Caco-2 (cell line): ENCODE measurements at regions of chr15 and their contacts with region 1.

Region 1: GRCh38 chr15:76285239-76285825 is 25.9 kb downstream of the ETFA start:
- DNase-seq: peak in 1 of 2 experiments; percentile 12
- H3K4me3 ChIP-seq: no peak overlapping the region
- H3K4me3 Mint-ChIP-seq: no peak overlapping the region
- H3K27ac Mint-ChIP-seq: no peak overlapping the region
- H3K4me1 ChIP-seq: no peaks in the 10 kb centered on the region
- H3K4me1 Mint-ChIP-seq: peaks cover 2% of the 10 kb centered on the region
- H3K27me3 ChIP-seq: no peaks in the 10 kb centered on the region
- H3K27me3 Mint-ChIP-seq: no peaks in the 10 kb centered on the region
- CTCF ChIP-seq: peak; percentile 47 to 51

Region 2: DNA sequence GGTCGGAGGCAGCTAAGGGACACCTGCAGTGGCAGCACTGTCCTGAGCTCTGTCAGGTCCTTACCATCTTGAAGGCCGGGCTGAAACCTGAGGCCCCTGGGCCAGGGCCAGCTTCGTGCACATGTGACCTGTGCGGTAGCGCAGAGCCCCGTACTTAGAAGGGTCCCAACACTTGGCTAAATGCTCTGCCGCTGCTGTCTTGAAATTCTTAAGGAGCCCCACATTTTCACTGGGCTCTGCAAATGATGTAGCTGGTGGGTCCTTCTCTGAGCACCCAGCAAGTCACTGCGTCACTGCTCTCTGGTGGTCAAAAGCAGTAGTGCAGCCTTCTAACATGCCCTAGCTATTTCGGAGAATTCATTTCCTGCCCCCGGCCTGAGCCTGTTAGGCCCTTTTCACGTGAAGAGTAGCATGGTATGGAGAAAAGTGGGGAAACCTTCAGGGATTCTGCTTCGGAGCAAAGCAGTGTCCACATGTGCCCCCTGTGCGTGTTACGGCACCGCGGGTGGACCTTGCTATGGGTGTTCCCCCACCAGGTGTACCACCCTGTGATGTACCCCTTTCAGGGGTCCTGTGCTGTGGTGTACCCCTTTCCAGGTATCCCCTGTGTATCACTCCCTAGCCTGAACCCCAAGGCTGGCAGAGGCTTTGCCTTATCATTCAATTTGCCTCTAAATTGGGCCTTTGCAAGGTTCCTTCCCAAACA is 145.8 kb before region 1 on chr15:
- CTCF ChIA-PET with region 1: no interaction called
- POLR2A ChIA-PET with region 1: no interaction called
- intact Hi-C with region 1: no loop called
- DNase-seq: peak; percentile 71 to 78
- H3K4me3 ChIP-seq: no peak overlapping the region
- H3K4me3 Mint-ChIP-seq: no peak overlapping the region
- H3K27ac Mint-ChIP-seq: no peak overlapping the region
- H3K4me1 ChIP-seq: no peaks in the 10 kb centered on the region
- H3K4me1 Mint-ChIP-seq: peaks cover 4% of the 10 kb centered on the region
- H3K27me3 ChIP-seq: peaks cover 1% of the 10 kb centered on the region; the same call in 1 of the 2 replicates
- H3K27me3 Mint-ChIP-seq: peaks cover 10% of the 10 kb centered on the region
- CTCF ChIP-seq: peak; percentile 78 to 90

Region 3: DNA sequence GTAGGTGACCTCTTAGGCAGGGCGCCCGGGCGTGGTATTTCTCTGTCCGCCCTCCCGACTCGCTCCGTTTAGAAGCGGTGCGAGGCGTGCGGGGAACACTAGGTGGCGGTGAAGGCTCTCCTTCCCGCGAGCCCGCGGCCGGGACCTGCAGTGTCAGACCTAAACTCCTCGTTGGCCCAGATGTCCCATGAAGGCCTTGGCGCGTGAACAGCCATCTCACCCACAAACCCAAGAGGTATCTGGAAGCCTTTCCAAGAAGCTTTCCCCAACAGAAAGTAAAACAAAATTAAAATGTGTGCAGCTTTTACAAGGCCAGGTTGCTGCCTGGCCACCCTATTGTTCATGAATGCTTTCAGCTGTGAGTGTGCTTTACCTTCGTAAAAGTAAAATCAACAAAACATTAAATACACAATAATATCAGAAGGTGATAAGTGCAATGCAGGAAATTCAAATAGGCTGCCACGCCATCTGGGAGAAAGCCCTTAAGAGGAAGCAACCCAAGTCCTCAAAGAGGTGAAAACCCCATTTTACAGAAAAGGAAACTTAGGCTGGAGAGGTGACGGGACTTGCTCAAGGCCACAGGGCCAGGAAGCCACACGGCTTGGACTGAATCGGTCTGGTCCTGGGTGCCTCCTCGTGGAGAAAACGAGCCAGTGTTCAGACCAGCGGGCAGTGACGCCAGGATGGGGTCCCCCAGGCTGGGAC is 94.3 kb before region 1 on chr15:
- CTCF ChIA-PET with region 1: no interaction called
- POLR2A ChIA-PET with region 1: no interaction called
- intact Hi-C with region 1: loop called (anchors 1 kb)
- DNase-seq: peak; percentile 78 to 87
- H3K4me3 ChIP-seq: peak overlapping the region; percentile 19; the same call in 1 of the 2 replicates
- H3K4me3 Mint-ChIP-seq: peak overlapping the region; percentile 66
- H3K27ac Mint-ChIP-seq: peak overlapping the region; percentile 19
- H3K4me1 ChIP-seq: peaks cover 9% of the 10 kb centered on the region
- H3K4me1 Mint-ChIP-seq: peaks cover 16% of the 10 kb centered on the region
- H3K27me3 ChIP-seq: no peaks in the 10 kb centered on the region
- H3K27me3 Mint-ChIP-seq: peaks cover 3% of the 10 kb centered on the region
- CTCF ChIP-seq: peak; percentile 84 to 89

Region 4: DNA sequence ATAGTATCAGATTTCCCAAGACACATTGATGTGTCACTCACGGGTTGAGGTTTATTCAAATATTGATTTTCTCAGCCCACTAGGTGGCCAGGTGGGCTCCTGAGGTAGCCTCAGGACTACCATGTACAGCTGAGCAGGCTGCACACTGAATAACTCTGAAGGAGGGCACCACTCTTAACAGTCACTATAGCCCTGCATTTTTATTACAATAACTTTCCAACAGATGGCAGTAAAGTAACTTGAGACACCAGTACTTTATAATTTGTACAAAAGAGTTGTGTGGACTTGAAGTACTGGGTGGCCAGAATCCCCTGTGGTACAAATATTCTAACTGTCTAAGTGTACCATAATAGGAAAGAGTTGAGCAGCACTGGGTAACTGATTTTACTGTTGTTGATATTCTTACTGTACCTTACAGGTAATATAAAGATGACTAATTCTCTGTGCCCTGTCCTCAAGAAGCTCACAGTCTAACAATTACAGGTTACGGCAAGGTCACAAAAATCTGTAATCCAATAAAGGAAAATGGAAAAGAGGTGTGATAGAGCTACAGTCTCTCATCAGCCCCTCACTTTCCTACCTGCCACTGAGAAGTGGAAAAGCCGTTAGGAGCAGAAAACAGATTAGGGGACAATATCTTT is 50.0 kb before region 1 on chr15:
- CTCF ChIA-PET with region 1: no interaction called
- POLR2A ChIA-PET with region 1: no interaction called
- intact Hi-C with region 1: loop called (anchors 5 kb)
- DNase-seq: peak in 1 of 2 experiments; percentile 42
- H3K4me3 ChIP-seq: no peak overlapping the region
- H3K4me3 Mint-ChIP-seq: no peak overlapping the region
- H3K27ac Mint-ChIP-seq: no peak overlapping the region
- H3K4me1 ChIP-seq: no peaks in the 10 kb centered on the region
- H3K4me1 Mint-ChIP-seq: peaks cover 12% of the 10 kb centered on the region
- H3K27me3 ChIP-seq: no peaks in the 10 kb centered on the region
- H3K27me3 Mint-ChIP-seq: no peaks in the 10 kb centered on the region
- CTCF ChIP-seq: peak; percentile 32 to 61